HAP-1 (cell line): ENCODE measurements at regions of chr11 and their contacts with region 1.

Region 1: GRCh38 chr11:75384438-75385080 is 14.8 kb upstream of the RPS3 start:
- DNase-seq: peak; percentile 42 to 84
- H3K4me3 ChIP-seq: no peak overlapping the region
- H3K4me1 ChIP-seq: peaks cover 5% of the 10 kb centered on the region
- H3K27me3 ChIP-seq: no peaks in the 10 kb centered on the region

Region 2: DNA sequence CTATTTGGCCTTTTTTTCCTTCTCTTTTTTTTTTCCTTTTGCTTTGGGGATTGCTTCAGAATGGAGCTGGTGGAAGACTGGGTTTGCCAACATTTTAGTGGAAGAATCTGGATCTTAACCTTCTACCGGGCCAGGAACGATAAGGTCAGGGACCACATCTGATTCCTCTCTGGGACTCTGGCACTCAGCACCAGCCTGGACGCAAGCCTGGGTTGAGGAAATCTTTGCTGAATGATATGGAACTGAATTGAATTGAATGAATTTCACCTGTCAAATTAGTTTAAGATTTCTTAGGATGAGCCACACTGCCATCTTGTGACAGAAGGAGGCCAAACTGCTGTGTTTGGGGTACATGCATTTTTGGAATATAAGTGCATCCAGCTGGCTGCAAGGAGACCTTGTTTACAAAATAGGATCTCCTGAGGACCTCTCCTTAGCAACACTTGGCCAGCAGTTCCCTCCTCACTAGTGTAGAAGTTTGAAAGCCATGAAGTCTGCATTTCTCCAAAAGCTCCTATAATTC is 113.6 kb before region 1 on chr11:
- in situ Hi-C with region 1: loop called (anchors 5 kb)
- DNase-seq: no peak
- H3K4me3 ChIP-seq: no peak overlapping the region
- H3K4me1 ChIP-seq: no peaks in the 10 kb centered on the region
- H3K27me3 ChIP-seq: no peaks in the 10 kb centered on the region